ENCODE measurements at regions of chr1 and their contacts with region 1.

Region 1: GRCh38 chr1:156927215-156928042 is 7.0 kb downstream of the LRRC71 start:
- DNase-seq: peak; percentile 75
- H3K27ac ChIP-seq: no peak overlapping the region
- CTCF ChIP-seq: peak; percentile 87

Region 2: DNA sequence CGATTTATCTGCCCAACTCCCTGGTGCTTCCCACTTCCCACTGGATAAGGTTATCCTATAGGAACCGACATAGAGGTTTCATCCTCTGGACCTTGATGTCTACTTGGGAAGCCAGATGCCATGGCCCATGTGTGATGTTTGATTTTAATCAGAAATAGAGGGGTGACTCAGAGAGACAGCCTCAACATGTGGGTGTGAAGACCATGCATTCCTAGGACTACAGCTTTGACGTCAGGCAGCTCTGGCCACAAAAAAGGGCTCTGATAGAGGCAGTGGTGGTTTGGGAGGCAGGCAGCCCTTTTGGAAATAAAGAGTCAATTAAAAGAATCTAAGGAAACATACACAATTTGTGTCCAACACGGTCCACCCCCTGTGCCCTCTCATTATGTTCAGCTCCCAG is 105.6 kb before region 1 on chr1:
- CTCF ChIA-PET with region 1: no interaction called
- POLR2A ChIA-PET with region 1: no interaction called
- DNase-seq: no peak
- H3K27ac ChIP-seq: no peak overlapping the region
- CTCF ChIP-seq: no peak

Region 3: GRCh38 chr1:156838981-156839410 is 88.4 kb before region 1 on chr1:
- CTCF ChIA-PET with region 1: interaction called, 11 read pairs
- POLR2A ChIA-PET with region 1: no interaction called
- DNase-seq: no peak
- H3K27ac ChIP-seq: no peak overlapping the region
- CTCF ChIP-seq: peak; percentile 83

Region 4: DNA sequence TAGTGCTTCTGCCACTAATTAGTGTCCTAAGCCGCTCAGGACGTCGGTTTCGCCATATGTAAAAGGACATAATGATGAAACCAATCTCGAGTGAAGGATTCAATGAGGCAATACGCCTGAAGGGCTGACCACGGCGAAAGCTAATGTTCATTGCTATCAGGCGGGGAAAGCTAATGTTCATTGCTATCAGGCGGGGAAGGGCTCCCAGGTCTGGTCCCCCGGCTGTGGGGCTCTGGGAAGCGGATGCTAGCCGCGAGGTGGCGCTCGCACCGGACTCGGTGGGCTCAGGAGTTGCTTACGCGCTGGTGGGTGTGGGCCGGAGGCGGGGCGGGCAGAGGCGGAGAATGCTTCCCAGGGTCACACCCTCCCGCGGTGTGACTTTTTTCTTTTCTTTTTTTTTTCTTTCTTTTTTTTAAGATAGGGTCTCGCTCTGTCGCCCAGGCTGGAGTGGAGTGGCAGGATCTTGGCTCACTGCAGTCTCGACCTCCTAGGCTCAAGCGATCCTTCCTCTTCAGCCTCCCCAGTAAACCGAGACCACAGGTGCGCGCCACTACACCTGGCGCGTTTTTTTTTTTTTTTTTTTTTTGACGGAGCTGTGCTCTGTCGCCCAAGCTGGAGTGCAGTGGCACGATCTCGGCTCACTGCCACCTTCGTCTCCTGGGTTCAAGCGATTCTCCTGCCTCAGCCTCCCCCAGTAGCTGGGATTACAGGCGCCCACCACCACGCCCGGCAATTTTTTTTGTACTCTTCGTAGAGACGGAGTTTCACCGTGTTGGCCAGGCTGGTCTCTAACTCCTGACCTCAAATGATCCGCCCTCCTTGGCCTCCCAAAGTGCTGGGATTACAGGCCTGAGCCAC is 35.0 kb before region 1 on chr1:
- CTCF ChIA-PET with region 1: interaction called, 77 read pairs
- POLR2A ChIA-PET with region 1: no interaction called
- DNase-seq: peak; percentile 83
- H3K27ac ChIP-seq: peak overlapping the region; percentile 99
- CTCF ChIP-seq: peak; percentile 92

Region 5: GRCh38 chr1:156910309-156910782 is 17.1 kb before region 1 on chr1:
- CTCF ChIA-PET with region 1: interaction called, 13 read pairs
- POLR2A ChIA-PET with region 1: no interaction called
- DNase-seq: no peak
- H3K27ac ChIP-seq: no peak overlapping the region
- CTCF ChIP-seq: peak; percentile 71

Region 6: GRCh38 chr1:156948708-156949107 is 21.3 kb after region 1 on chr1:
- CTCF ChIA-PET with region 1: interaction called, 10 read pairs
- POLR2A ChIA-PET with region 1: no interaction called
- DNase-seq: no peak
- H3K27ac ChIP-seq: no peak overlapping the region
- CTCF ChIP-seq: no peak

Region 7: GRCh38 chr1:157025856-157026255 is 98.4 kb after region 1 on chr1:
- CTCF ChIA-PET with region 1: no interaction called
- POLR2A ChIA-PET with region 1: no interaction called
- DNase-seq: no peak
- H3K27ac ChIP-seq: no peak overlapping the region
- CTCF ChIP-seq: no peak